Right cardiac atrium (tissue), 5 donors: ENCODE measurements at regions of chr19 and their contacts with region 1.

Region 1: DNA sequence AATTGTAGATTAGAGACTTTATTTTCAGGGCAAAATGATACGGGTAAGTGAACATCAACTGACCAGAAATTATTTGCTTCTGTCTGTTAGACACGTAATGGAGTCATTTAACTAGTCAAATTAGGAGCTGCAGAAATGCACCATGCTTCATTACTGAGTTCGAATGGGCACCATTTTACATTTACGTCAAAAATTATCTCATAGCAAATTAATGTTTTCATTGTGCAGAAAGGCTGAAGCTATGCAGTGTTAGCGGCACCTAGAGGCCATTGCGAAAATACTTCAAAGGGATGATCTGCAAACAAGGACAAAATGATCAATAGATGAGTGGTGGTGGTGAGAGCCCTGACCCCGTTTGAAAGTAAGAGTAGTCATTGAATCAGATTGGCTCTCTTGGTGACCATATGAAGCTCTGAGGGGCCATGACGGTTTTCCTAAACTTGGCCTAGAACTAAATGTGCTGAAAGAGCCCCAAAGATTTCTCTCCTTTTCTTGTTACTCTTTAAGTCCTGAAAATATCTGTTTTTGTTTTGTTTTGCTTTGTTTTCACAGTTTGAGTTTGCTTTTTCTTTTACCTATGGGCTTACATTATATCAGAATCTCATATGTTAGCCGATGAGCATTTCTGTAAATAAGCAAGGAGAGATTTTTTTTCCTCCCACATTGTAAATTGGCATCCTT is 277.9 kb downstream of the ZNF536 start:
- DNase-seq: no peak
- ATAC-seq: peak in 1 of 2 donors; percentile 44
- H3K4me3 ChIP-seq: no peak overlapping the region
- H3K27ac ChIP-seq: no peak overlapping the region
- H3K4me1 ChIP-seq: no peaks in the 10 kb centered on the region
- H3K27me3 ChIP-seq: peaks cover 2% of the 10 kb centered on the region

Region 2: DNA sequence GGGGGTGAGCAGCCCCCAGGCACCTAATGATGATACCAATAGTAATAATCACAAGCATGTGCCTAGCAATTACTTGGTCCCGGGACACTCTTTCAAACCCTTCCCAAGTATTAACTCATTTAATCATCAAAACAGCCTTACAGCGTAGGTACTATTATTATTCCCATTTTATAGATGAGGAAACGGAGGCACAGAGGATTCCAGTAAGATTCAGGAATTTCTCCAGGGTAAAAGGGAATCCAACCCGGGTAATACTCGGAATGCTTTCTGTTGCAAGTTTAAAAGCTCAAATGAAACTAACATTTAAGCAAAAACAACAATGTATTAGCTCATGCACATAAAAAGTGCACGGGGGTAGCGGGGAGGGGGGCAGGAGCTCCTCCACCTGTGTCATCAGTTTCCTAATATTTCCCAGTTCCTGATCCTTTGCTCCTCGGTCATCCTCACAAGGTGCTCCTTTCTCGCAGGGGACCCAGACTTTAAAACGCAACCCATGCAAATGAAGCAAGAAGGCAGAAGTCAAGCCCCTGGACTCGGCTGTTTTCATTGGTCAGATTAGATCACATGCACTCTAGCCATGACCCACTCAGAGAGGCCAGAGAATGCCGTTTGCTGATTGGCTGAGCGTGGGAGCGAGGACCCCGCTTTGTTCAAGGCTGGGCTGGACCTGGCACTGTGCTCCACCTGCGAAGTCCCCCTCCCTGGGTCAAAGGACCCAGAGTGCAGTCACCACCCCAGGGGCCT is 896.7 kb before region 1 on chr19:
- intact Hi-C with region 1: loop called in 1 of 4 experiments (anchors 10 kb)
- DNase-seq: no peak
- ATAC-seq: no peak
- H3K4me3 ChIP-seq: no peak overlapping the region
- H3K27ac ChIP-seq: no peak overlapping the region
- H3K4me1 ChIP-seq: no peaks in the 10 kb centered on the region
- H3K27me3 ChIP-seq: no peaks in the 10 kb centered on the region

Region 3: DNA sequence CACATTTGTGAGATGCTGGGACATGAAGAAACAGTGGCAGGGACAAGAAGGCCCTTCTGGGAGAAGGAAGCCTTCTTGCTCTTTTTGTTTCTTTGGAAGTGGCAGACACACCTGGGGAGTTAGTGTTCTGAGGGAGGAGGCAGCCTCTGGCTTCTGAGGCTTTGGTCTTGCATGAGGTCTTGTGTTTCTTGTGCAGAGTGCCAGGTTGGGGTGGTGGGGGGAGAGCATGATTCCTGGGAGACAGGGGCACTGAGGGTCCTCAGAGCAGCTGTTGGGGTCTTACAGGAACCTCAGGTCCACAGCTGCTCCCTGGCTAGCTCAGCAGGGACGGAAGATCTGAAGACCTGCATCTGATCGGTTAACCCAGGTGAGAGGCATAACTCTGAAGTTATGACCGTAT is 445.4 kb before region 1 on chr19:
- intact Hi-C with region 1: no loop called
- DNase-seq: no peak
- ATAC-seq: no peak
- H3K4me3 ChIP-seq: no peak overlapping the region
- H3K27ac ChIP-seq: no peak overlapping the region
- H3K4me1 ChIP-seq: no peaks in the 10 kb centered on the region
- H3K27me3 ChIP-seq: no peaks in the 10 kb centered on the region

Region 4: DNA sequence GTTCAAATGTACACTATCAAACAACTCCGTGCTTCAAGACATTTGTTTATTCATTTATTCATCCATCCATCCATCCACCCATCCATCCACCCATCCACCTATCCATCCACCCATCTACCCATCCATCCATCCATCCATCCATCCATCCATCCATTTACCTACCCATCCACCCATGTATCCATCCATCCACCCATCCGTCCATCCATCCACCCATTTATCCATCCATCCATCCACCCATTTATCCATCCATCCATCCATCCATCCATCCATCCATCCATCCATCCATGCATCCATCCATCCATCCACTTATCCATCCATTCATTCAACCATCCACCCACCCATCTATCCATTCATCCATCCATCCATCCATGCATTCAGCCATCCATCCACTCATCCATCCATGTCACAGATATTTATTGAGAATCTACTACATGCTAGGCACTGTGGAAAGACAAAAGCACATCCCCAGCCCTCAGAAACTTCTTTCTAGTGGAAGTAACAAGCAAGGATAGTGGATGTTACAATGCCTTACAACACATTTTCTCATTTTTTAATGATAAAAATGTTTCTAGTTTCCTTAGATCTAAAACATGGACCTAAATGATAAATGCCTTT is 40.3 kb before region 1 on chr19:
- intact Hi-C with region 1: no loop called
- DNase-seq: no peak
- ATAC-seq: no peak
- H3K4me3 ChIP-seq: no peak overlapping the region
- H3K27ac ChIP-seq: no peak overlapping the region
- H3K4me1 ChIP-seq: no peaks in the 10 kb centered on the region
- H3K27me3 ChIP-seq: no peaks in the 10 kb centered on the region